Activated B cell treated with CpG ODN at 0.5 μM for 24 hours (primary cell): ENCODE measurements at regions of chr1 and their contacts with region 1.

Region 1: GRCh38 chr1:182962554-182963115 is 9.7 kb upstream of the SHCBP1L start:
- DNase-seq: no peak
- ATAC-seq: peak; percentile 100
- H3K4me3 Mint-ChIP-seq: peak overlapping the region; percentile 67
- H3K27ac Mint-ChIP-seq: peak overlapping the region; percentile 76
- H3K4me1 Mint-ChIP-seq: peaks cover 8% of the 10 kb centered on the region
- H3K27me3 Mint-ChIP-seq: peaks cover 2% of the 10 kb centered on the region
- CTCF ChIP-seq: no peak

Region 2: DNA sequence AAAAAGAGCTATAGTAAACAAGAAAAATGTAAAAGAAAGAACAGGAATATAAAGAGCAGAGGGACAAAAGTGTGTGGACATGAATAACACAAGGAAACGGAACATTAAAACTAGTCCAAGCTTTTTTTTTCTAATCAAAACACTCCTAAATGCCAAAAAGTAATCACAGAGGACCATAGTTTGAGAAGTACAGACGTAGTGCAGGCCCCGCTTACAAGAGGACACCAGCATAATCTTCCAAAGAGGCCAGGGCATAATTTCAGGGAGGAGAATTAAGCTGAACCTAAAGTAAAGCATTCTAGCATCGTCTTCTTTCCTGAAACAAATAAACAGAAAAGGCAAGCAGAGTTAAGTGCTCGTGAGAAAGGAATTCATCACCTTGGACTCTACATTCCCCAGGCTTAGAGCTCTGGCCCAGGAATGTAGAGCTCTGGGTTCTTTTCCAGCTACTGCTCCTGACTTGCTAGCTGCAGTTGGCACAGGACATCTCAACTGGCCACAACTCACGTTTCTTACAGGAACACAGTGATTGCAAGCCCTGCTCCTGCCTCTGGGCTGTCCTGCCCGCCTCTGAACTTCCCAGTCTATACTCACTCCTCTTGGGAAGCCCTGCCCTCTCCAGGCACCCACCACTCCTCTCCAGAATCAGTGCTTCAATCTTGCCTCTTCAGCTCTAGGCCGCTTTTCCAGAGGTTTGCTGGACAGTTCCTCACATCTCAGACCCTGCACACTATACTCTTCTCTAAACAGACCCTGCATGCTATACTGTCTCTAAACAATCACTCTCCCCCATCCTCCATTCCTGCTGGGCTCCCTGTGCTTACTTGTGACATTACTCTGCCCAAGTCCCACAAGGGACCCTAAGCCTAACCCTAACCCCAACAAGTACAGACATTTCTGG is 288.0 kb before region 1 on chr1:
- CTCF ChIA-PET with region 1: no interaction called
- POLR2A ChIA-PET with region 1: no interaction called
- intact Hi-C with region 1: no loop called
- DNase-seq: no peak
- ATAC-seq: no peak
- H3K4me3 Mint-ChIP-seq: no peak overlapping the region
- H3K27ac Mint-ChIP-seq: no peak overlapping the region
- H3K4me1 Mint-ChIP-seq: peaks cover 27% of the 10 kb centered on the region
- H3K27me3 Mint-ChIP-seq: peaks cover 16% of the 10 kb centered on the region
- CTCF ChIP-seq: no peak

Region 3: DNA sequence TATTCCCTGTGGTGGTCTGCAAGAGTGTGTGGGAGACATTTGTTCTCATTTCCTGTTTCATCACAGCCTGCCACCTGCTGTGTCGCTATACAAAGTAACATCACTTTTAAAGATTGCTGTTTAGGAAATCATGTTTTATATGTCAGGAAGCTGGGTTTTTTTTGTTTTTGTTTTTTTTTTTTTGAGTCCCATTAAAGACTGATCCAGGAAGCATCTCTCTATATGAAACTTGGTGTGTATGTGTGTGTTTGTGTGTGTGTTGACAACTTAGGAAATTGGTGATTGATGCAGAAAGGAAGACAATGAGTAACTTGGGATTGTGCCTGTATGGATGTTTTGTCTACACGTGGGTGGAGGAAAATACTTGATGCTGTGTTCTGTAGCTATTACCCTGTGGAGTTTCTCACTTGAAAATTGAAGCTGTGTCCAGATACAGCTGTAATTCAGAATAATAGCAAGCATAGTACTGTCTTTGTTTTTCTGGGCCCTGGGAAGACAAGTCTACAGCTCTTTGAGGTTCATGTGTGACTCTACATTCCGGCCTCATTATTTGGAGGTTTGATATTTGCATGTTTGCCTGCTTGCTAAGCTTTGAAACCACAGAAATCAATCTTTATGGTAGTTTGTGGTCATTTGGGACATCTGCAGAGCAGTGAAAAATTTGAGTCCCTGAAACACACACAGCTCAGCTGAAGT is 108.4 kb after region 1 on chr1:
- CTCF ChIA-PET with region 1: interaction called, 4 read pairs
- POLR2A ChIA-PET with region 1: no interaction called
- intact Hi-C with region 1: loop called (anchors 1 kb)
- DNase-seq: no peak
- ATAC-seq: peak; percentile 67
- H3K4me3 Mint-ChIP-seq: peak overlapping the region; percentile 50
- H3K27ac Mint-ChIP-seq: no peak overlapping the region
- H3K4me1 Mint-ChIP-seq: peaks cover 33% of the 10 kb centered on the region
- H3K27me3 Mint-ChIP-seq: peaks cover 6% of the 10 kb centered on the region
- CTCF ChIP-seq: no peak

Region 4: DNA sequence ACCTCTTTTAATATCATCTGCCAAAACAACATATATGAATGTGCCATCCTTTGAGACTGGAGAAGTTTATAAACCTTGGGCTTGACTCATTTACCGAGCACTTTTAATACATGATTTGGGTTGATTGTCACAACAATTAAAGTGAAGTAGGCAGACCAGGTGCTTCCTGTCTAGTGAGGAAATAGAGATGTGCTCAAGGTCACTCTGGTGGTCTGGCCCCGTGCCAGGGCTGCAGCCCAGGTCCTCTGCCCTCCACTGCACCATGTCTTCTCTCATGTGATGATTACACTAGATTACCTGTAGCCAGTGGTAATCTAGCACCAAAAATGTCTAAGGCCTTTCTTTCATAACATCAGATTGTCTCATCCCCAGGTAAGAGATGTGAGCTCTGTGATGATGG is 161.6 kb after region 1 on chr1:
- CTCF ChIA-PET with region 1: interaction called, 5 read pairs
- POLR2A ChIA-PET with region 1: no interaction called
- intact Hi-C with region 1: loop called (anchors 5 kb)
- DNase-seq: no peak
- ATAC-seq: peak; percentile 18
- H3K4me3 Mint-ChIP-seq: no peak overlapping the region
- H3K27ac Mint-ChIP-seq: no peak overlapping the region
- H3K4me1 Mint-ChIP-seq: peaks cover 17% of the 10 kb centered on the region
- H3K27me3 Mint-ChIP-seq: no peaks in the 10 kb centered on the region
- CTCF ChIP-seq: no peak

Region 5: DNA sequence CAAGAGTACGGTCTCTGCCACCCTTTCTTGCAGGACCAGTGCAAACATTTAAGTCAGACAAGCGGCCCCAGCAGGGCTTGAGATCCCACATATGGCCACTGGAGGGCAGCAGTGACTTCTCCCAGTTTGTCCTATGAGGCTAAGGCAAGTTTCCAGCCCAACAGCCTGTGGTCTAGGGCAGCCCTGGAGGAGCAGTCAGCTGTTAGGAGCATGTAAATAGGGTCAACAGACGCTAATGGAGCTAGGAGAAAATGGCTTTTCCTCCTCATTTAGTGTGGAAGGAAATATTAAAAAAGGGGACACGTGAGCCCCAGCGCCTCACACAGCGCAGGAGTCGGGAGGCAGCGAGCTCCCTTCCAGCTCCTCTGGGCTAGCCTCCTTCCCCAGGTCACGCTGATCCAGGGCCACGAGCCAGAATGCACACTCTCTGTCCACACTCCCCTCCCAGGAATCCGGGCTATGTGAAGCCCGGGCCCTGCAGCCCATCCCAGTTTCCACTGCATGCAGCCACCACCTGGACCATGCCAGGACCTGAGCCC is 319.0 kb after region 1 on chr1:
- CTCF ChIA-PET with region 1: interaction called, 18 read pairs
- POLR2A ChIA-PET with region 1: interaction called, 4 read pairs
- intact Hi-C with region 1: loop called (anchors 1 kb)
- DNase-seq: peak; percentile 57
- ATAC-seq: peak; percentile 67
- H3K4me3 Mint-ChIP-seq: no peak overlapping the region
- H3K27ac Mint-ChIP-seq: no peak overlapping the region
- H3K4me1 Mint-ChIP-seq: no peaks in the 10 kb centered on the region
- H3K27me3 Mint-ChIP-seq: peaks cover 17% of the 10 kb centered on the region
- CTCF ChIP-seq: peak; percentile 63

Region 6: DNA sequence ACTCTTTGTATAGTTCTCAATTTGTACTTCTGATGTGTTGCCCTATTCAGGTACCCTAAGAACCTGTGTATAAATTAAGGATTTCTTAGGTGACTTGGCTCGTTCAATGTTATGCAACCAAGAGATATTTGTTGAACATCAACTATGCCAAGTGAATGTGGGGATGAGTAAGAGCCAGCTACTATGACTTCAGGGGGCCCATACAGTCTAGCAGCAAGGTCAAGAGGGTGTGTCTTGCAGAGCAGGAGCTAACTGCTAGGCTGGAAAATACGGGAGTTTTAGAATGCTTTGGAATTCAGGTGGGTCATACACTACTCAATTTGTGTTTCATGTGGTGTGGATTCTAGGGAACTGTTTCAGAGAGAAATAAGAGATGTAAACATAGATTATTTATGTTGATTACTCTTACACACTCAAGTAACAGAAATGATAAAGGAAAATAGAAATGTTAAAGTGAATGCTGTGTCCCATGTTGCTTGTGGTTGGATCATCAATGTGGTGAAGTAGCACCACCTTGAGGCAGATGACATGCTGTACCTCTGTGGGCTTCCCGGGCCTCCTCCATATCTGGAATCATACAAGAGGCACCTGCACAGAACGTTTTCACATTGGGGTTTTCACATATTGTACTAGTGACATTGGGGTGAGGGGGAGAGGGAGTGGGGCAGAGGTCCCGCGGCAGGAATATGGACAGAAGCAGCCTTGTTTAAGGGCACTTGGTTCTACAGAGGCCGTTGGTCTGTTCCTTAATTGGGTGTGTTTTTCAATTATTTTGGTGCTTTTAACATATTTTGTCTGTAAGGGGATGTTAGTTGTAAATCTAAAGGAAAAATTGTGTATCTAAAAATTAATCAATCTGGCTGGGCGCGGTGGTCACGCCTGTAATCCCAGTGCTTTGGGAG is 660.5 kb after region 1 on chr1:
- CTCF ChIA-PET with region 1: no interaction called
- POLR2A ChIA-PET with region 1: no interaction called
- intact Hi-C with region 1: loop called (anchors 2 kb)
- DNase-seq: peak; percentile 20
- ATAC-seq: peak; percentile 94
- H3K4me3 Mint-ChIP-seq: no peak overlapping the region
- H3K27ac Mint-ChIP-seq: peak overlapping the region; percentile 50
- H3K4me1 Mint-ChIP-seq: peaks cover 26% of the 10 kb centered on the region
- H3K27me3 Mint-ChIP-seq: no peaks in the 10 kb centered on the region
- CTCF ChIP-seq: no peak